Activated naive CD8-positive, alpha-beta T cell treated with anti-CD3 and anti-CD28 coated beads, Interleukin-2, amount 10 ng/mL, durations not matched to agents 7 days and 5 days (primary cell): ENCODE measurements at regions of chr1 and their contacts with region 1.

Region 1: GRCh38 chr1:110338886-110339406 is at the start of gene RBM15:
- DNase-seq: peak; percentile 90
- ATAC-seq: peak; percentile 77
- H3K4me3 Mint-ChIP-seq: no peak within 1 kb of the TSS
- H3K27ac Mint-ChIP-seq: no peak within 1 kb of the TSS
- H3K4me1 Mint-ChIP-seq: peaks cover 46% of the 10 kb centered on the region
- H3K27me3 Mint-ChIP-seq: no peaks in the 10 kb centered on the region
- total RNA-seq, gene RBM15: 80.3 to 80.6 TPM

Region 2: GRCh38 chr1:110034451-110035235 is 304.3 kb before region 1 on chr1 and contains the start of gene STRIP1:
- POLR2A ChIA-PET with region 1: interaction called, 20 read pairs
- DNase-seq: peak; percentile 88
- ATAC-seq: peak; percentile 90
- H3K4me3 Mint-ChIP-seq: peak within 1 kb of the TSS; percentile 94
- H3K27ac Mint-ChIP-seq: peak within 1 kb of the TSS; percentile 83
- H3K4me1 Mint-ChIP-seq: peaks cover 39% of the 10 kb centered on the region
- H3K27me3 Mint-ChIP-seq: no peaks in the 10 kb centered on the region
- total RNA-seq, gene STRIP1: 47.5 to 49.1 TPM

Region 3: GRCh38 chr1:110209715-110210603 is 129.0 kb before region 1 on chr1 and contains the start of gene KCNC4:
- POLR2A ChIA-PET with region 1: interaction called, 100 read pairs
- DNase-seq: peak; percentile 90
- ATAC-seq: peak; percentile 93
- H3K4me3 Mint-ChIP-seq: peak within 1 kb of the TSS; percentile 93
- H3K27ac Mint-ChIP-seq: peak within 1 kb of the TSS; percentile 89
- H3K4me1 Mint-ChIP-seq: peaks cover 36% of the 10 kb centered on the region
- H3K27me3 Mint-ChIP-seq: peaks cover 11% of the 10 kb centered on the region
- total RNA-seq, gene KCNC4: 8.9 to 9.0 TPM

Region 4: DNA sequence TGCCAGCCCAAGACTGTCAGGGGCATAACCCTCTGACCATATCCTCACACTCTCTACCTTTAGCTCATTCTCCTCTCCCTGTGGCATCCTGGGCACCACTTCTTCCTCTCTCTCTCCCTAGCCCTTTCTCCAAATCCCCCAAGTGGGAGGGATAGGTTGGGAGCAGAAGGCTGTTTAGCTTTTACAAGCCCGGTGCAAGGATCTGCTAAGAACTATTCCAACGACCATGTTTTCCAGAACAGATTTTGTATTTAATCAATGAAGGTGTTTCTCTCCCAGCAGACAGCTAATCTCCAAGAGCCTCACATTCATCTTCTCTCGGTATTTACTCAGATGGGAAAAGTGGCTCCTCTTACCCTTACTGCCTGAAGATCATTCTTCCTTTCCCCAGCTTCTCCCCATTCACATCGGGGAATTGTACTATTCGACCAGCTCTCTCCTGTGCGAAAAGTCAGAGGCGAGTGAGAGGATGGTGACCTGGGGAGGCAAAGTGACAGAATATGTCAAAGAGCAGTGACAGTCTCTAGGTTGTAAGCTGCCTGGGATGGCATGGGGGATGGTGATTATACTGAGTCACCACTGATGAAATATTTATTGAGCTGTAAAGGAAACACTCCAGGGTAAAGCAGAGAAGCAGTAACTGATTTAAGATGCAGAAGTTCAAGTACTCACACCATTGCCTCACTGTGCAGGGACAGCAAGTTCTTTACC is 46.8 kb before region 1 on chr1:
- POLR2A ChIA-PET with region 1: no interaction called
- DNase-seq: no peak
- ATAC-seq: no peak
- H3K4me3 Mint-ChIP-seq: no peak overlapping the region
- H3K27ac Mint-ChIP-seq: no peak overlapping the region
- H3K4me1 Mint-ChIP-seq: no peaks in the 10 kb centered on the region
- H3K27me3 Mint-ChIP-seq: peaks cover 13% of the 10 kb centered on the region

Region 5: GRCh38 chr1:110370827-110371226 is 31.9 kb after region 1 on chr1:
- POLR2A ChIA-PET with region 1: interaction called, 10 read pairs
- DNase-seq: no peak
- ATAC-seq: no peak
- H3K4me3 Mint-ChIP-seq: no peak overlapping the region
- H3K27ac Mint-ChIP-seq: no peak overlapping the region
- H3K4me1 Mint-ChIP-seq: peaks cover 8% of the 10 kb centered on the region
- H3K27me3 Mint-ChIP-seq: no peaks in the 10 kb centered on the region

Region 6: GRCh38 chr1:110384581-110385321 is 45.8 kb after region 1 on chr1:
- POLR2A ChIA-PET with region 1: interaction called, 11 read pairs
- DNase-seq: no peak
- ATAC-seq: no peak
- H3K4me3 Mint-ChIP-seq: no peak overlapping the region
- H3K27ac Mint-ChIP-seq: peak overlapping the region; percentile 54
- H3K4me1 Mint-ChIP-seq: peaks cover 12% of the 10 kb centered on the region
- H3K27me3 Mint-ChIP-seq: no peaks in the 10 kb centered on the region

Region 7: DNA sequence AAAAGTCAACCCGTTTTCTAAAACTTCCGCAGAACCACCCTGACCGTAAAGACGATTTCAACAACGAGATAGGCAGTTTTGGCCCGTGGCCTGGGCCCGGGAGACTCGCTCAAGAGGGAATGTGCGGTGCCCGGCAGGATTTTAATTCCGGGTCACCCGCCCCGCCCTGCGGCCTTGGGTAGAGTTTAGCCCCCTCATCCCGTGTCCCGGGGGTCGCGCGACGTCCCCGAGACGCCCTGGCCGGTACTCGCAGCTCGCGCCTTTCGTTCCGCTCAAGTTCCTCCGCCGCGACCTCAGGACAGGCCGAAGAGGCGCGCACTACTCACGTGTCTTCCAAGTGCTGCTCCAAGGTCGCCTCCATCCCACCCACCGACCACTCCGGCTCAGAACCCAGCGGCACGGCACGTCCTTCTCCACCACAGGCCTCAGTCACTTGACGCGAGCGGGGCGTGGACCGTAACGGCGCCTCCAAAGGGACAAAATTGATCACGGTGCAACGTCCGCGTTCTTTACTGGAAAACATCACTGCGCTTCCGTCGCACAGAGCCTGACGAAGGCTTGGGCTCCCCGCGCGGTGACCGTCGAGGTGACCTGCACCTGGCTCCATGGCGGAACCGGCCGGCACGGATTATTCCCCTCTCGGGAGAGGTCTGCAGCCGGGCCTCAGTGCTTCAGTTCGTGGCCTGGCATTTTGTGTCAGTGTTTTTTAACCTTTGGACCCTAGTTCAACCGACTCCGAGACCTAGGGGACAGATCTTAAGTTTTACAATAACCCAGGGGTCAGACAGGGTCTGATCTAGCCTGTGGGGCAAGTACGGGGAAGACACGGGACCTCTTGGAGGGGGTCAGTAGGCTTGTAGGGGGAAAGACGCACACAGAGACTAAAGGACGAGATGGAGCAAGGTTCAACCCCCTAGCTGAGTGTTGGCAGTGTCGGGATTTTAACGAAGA is 68.6 kb after region 1 on chr1 and contains the start of gene LAMTOR5:
- POLR2A ChIA-PET with region 1: interaction called, 56 read pairs
- DNase-seq: peak; percentile 92
- ATAC-seq: peak; percentile 92
- H3K4me3 Mint-ChIP-seq: peak within 1 kb of the TSS; percentile 100
- H3K27ac Mint-ChIP-seq: peak within 1 kb of the TSS; percentile 100
- H3K4me1 Mint-ChIP-seq: peaks cover 15% of the 10 kb centered on the region
- H3K27me3 Mint-ChIP-seq: no peaks in the 10 kb centered on the region
- total RNA-seq, gene LAMTOR5: 115 TPM